IMR-90 (cell line): ENCODE measurements at regions of chr1 and their contacts with region 1.

Region 1: DNA sequence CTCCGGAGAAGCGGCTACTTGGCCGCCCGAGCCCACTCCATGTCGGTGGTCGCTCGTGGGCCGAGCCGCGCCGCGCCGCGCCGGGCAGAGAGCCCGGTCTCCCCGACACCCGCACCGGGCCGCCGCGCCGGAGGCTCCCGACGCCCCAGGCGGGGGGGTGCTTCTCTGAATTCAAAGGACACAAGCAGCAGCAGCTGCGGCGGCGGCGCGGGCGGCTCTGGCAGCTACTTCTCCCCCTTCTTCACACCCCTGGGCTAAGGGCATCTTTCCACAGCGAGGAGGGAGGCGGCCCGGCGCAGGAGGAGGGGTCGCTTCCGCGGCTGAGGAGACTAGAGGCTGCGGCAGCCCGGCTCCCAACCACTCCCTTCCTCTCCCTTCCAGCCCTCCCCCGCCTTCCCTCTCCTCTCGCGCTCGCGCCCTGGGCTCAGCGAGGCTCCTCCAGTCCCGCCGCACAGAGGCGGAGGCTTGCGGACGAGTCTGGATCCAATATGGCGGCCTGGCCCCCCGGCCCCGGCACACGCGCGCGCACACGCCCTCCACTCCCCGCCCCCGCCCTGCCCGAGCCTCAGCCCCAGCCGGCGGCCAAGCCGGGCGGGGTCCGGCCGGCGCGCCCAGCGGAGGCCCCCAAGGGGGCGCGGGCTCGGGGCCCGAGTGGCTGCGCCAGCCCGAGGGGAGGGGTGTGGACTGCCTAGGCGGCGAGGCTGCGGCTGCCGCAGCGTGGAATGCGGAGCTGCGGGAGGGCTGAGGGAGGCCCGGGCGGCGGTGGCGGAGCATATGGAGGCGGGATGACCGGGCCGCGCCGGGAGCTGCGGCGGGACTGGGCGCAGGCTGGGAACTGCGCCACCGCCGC is at the start of gene CDC42BPA:
- DNase-seq: peak; percentile 87
- ATAC-seq: peak; percentile 90
- H3K4me3 ChIP-seq: peak within 1 kb of the TSS; percentile 89
- H3K27ac ChIP-seq: peak within 1 kb of the TSS; percentile 86
- H3K4me1 ChIP-seq: no peaks in the 10 kb centered on the region
- H3K27me3 ChIP-seq: no peaks in the 10 kb centered on the region
- CTCF ChIP-seq: no peak
- POLR2A ChIP-seq: no peak; the same call in 1 of the 2 replicates
- RAD21 ChIP-seq: no peak
- total RNA-seq, gene CDC42BPA: 27.8 and 36.4 TPM in 2 replicates

Region 2: DNA sequence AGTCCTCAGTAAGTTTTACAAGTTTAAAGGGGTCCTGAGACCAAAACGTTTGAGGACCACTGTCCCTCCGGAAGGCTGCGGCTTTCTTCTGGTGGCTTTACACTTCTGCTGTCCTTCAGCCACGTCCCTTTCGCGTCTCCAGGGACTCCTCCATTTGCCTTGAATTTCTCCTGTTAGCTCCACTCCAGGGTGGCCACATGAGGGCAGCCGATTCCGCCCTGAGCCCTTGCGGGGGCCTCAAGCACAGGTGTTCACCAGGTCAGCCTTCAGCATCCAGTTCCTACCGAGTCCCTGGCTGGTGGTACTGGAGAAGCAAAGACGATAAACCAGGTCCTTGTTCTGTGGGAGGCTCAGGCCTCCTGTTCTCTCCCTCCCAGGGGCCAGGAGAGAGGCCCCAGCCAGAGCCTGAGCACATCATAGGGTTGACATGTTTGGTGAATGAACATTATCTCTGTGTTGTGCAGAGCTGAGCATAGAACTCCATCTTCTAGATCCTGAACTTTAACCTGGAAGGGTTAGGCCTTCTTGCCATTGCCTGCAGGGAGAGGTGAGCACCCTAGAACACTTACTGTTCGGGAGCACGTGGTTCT is 405.5 kb before region 1 on chr1:
- CTCF ChIA-PET with region 1: no interaction called
- POLR2A ChIA-PET with region 1: no interaction called
- dilution Hi-C with region 1: no loop called
- in situ Hi-C with region 1: no loop called
- intact Hi-C with region 1: loop called (anchors 10 kb)
- DNase-seq: peak; percentile 6
- ATAC-seq: peak; percentile 59
- H3K4me3 ChIP-seq: no peak overlapping the region
- H3K27ac ChIP-seq: no peak overlapping the region
- H3K4me1 ChIP-seq: no peaks in the 10 kb centered on the region
- H3K27me3 ChIP-seq: no peaks in the 10 kb centered on the region
- CTCF ChIP-seq: peak; percentile 39
- POLR2A ChIP-seq: no peak
- RAD21 ChIP-seq: peak; percentile 49

Region 3: DNA sequence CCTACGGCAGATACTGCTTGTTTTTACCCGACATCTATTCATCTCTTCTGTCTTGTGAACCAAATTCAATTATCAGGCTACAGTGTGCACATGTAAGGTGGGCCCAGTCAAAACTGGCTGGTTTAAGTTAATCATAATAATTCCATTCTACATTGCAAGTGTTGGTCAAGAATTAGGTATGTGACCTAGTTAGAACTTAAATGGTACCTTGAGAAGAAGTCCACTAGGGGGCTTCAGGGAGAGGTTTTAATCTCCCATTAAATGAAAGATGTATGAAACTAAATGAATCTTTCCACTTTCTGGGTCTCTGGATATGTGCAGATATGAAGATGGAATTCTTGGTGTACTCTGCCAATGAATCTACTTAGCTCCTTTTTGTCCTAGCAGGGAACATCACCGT is 187.0 kb before region 1 on chr1:
- CTCF ChIA-PET with region 1: no interaction called
- POLR2A ChIA-PET with region 1: no interaction called
- dilution Hi-C with region 1: no loop called
- in situ Hi-C with region 1: no loop called
- intact Hi-C with region 1: loop called (anchors 2 kb)
- DNase-seq: peak; percentile 54
- ATAC-seq: peak; percentile 59
- H3K4me3 ChIP-seq: no peak overlapping the region
- H3K27ac ChIP-seq: no peak overlapping the region
- H3K4me1 ChIP-seq: peaks cover 2% of the 10 kb centered on the region; the same call in 1 of the 2 replicates
- H3K27me3 ChIP-seq: no peaks in the 10 kb centered on the region
- CTCF ChIP-seq: peak; percentile 59
- POLR2A ChIP-seq: no peak
- RAD21 ChIP-seq: peak; percentile 57

Region 4: DNA sequence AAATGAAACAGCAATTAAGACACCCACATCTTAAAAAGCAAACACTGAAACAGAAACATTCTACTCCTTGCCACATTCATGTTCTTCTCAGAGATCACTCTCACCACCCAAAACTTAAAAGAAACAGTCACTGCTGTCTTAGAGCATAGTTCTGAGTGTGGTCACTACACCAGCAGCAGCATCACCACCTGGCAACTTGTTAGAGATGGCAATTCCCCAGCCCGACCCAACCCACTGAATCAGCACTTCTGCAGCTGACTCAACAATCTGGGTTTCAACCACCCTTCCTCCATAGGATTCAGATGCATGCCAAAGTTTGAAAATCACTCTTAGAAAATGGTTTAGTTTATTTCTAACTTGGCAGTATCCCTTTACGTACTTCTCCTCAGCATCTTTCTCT is 126.1 kb before region 1 on chr1:
- CTCF ChIA-PET with region 1: no interaction called
- POLR2A ChIA-PET with region 1: no interaction called
- dilution Hi-C with region 1: no loop called
- in situ Hi-C with region 1: no loop called
- intact Hi-C with region 1: loop called (anchors 2 kb)
- DNase-seq: peak; percentile 98
- ATAC-seq: peak; percentile 98
- H3K4me3 ChIP-seq: no peak overlapping the region
- H3K27ac ChIP-seq: no peak overlapping the region
- H3K4me1 ChIP-seq: no peaks in the 10 kb centered on the region
- H3K27me3 ChIP-seq: no peaks in the 10 kb centered on the region
- CTCF ChIP-seq: no peak
- POLR2A ChIP-seq: no peak
- RAD21 ChIP-seq: no peak

Region 5: DNA sequence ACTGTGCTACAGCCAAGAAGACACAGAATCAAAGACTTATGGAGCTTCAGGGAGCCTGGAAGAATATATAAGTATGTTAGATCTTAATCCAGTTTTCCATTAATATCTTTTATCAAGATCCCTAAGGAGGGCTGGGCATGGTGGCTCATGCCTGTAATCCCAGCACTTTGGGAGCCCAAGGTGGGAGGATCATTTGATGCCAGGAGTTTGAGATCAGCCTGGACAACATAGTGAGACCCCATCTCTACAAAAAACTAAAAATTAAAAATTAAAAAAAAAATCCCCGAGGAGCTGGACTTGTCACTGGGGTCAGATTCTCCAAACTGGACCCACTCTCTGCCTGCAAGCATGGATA is 113.9 kb after region 1 on chr1:
- CTCF ChIA-PET with region 1: interaction called, 4 read pairs
- POLR2A ChIA-PET with region 1: no interaction called
- dilution Hi-C with region 1: no loop called
- in situ Hi-C with region 1: loop called (anchors 10 kb)
- intact Hi-C with region 1: loop called (anchors 1 kb)
- DNase-seq: no peak
- ATAC-seq: no peak
- H3K4me3 ChIP-seq: no peak overlapping the region
- H3K27ac ChIP-seq: peak overlapping the region; percentile 12; the same call in 1 of the 2 replicates
- H3K4me1 ChIP-seq: peaks cover 10% of the 10 kb centered on the region
- H3K27me3 ChIP-seq: no peaks in the 10 kb centered on the region
- CTCF ChIP-seq: no peak
- POLR2A ChIP-seq: no peak
- RAD21 ChIP-seq: no peak